WTC11 (cell line): ENCODE measurements at regions of chr17 and their contacts with region 1.

Region 1: DNA sequence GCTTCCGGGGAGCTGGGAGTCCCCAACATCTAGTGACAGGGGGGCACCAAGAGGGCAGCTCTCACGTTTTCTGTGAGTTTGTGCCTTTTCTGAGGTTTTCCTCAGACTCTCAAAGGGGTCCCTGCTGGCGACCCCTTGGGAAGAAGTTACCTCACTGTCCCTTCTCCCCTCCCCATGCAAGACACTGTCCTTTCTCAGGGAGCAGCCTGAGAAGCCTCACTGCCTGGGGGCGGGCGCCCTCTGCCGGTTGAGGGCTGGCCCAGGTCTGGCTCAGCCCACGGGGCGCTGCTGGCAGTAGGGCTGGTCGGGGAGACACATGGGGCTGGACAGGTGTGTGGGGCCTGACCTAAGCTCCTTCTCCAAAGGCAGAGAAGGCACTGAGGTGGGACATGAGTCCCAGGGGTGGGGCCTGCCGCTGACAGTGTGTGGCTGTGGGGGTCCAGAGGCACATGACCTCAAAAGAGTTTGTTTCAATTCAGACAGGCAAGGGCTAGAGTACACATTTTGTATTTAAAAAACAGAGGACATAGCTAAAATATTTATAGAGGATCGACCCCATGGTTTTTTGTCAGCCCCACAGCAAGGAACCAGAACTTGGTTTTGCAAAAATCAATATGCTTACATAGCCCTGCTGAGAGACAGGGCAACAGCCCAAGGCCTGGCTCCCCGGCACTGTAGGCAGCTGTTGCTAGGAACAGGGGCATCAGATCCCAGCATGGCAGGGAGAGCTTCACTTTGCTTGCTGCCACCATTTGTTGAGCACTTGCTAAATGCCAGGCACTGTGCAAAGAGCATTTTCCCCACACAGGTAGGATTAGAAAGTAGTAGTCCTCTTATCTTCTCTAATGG is 18.5 kb upstream of the ALDH3A1 start:
- DNase-seq: peak; percentile 90
- ATAC-seq: peak; percentile 91
- H3K4me3 Mint-ChIP-seq: no peak overlapping the region
- H3K27ac Mint-ChIP-seq: no peak overlapping the region
- H3K4me1 Mint-ChIP-seq: 0 out of 2 replicates have a peak, but pooled peaks cover 2% of the 10 kb centered on the region
- H3K27me3 Mint-ChIP-seq: no peaks in the 10 kb centered on the region
- CTCF ChIP-seq: peak; percentile 64; the same call in 1 of the 2 replicates

Region 2: DNA sequence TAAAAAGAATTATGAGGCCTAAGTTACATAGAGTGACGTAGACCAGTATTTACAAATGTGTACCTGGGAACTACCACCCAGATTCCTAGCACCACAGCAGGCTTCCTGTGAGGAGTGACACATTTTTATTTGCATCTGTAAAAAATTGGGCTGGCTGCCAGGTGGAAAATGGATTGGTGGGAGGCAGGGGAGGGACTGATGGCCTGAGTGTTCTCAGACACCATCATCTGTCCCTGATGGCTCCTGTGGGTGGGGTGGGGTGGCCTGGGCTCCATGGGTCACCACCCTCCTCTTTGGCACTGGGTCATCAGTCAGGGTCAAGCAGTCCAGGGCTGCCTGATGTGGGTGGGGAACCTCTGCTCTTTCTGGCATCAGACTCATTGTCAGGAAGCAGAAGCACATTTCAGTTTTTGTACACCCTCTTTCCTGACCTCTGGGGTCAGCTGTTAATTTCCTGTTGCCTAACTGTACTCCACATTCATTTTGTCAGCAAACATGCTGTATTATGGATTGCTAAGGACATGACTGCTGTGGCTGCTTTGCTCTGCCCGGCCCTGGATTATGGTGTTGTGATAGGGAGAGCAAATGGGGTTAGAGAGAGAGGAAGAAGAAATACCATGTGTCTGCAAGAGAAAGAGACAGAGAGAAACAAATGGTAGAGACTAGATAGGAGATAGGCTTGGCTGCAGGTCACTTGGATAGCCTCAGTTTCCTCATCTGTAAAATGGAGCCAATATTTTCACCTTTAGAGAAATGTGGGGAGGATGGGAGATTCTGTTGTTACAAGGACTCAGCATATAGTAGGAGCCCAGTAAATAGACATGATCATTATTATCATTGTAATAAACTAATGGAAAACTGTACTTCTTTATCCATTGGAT is 368.1 kb before region 1 on chr17:
- CTCF ChIA-PET with region 1: interaction called, 19 read pairs
- POLR2A ChIA-PET with region 1: no interaction called
- DNase-seq: no peak
- ATAC-seq: no peak
- H3K4me3 Mint-ChIP-seq: no peak overlapping the region
- H3K27ac Mint-ChIP-seq: peak overlapping the region; percentile 51; the same call in 1 of the 2 replicates
- H3K4me1 Mint-ChIP-seq: peaks cover 11% of the 10 kb centered on the region
- H3K27me3 Mint-ChIP-seq: no peaks in the 10 kb centered on the region; the same call in 1 of the 2 replicates
- CTCF ChIP-seq: no peak

Region 3: GRCh38 chr17:19533718-19534561 is 232.7 kb before region 1 on chr17 and contains the start of gene SLC47A1:
- CTCF ChIA-PET with region 1: interaction called, 12 read pairs
- POLR2A ChIA-PET with region 1: interaction called, 3 read pairs
- DNase-seq: peak; percentile 42
- ATAC-seq: peak; percentile 83
- H3K4me3 Mint-ChIP-seq: peak within 1 kb of the TSS; percentile 71
- H3K27ac Mint-ChIP-seq: no peak within 1 kb of the TSS
- H3K4me1 Mint-ChIP-seq: peaks cover 35% of the 10 kb centered on the region
- H3K27me3 Mint-ChIP-seq: peaks cover 43% of the 10 kb centered on the region
- CTCF ChIP-seq: no peak
- total RNA-seq, gene SLC47A1: 2.5 to 3.3 TPM (median 2.9 TPM) in 3 replicates

Region 4: GRCh38 chr17:19648475-19649406 is 117.9 kb before region 1 on chr17 and contains the start of gene ALDH3A2:
- CTCF ChIA-PET with region 1: interaction called, 42 read pairs
- POLR2A ChIA-PET with region 1: interaction called, 5 read pairs
- DNase-seq: peak; percentile 89
- ATAC-seq: peak; percentile 83
- H3K4me3 Mint-ChIP-seq: peak within 1 kb of the TSS; percentile 92
- H3K27ac Mint-ChIP-seq: peak within 1 kb of the TSS; percentile 84
- H3K4me1 Mint-ChIP-seq: peaks cover 58% of the 10 kb centered on the region
- H3K27me3 Mint-ChIP-seq: peaks cover 8% of the 10 kb centered on the region
- CTCF ChIP-seq: no peak
- total RNA-seq, gene ALDH3A2: 68.5 to 84.3 TPM (median 80.6 TPM) in 3 replicates

Region 5: DNA sequence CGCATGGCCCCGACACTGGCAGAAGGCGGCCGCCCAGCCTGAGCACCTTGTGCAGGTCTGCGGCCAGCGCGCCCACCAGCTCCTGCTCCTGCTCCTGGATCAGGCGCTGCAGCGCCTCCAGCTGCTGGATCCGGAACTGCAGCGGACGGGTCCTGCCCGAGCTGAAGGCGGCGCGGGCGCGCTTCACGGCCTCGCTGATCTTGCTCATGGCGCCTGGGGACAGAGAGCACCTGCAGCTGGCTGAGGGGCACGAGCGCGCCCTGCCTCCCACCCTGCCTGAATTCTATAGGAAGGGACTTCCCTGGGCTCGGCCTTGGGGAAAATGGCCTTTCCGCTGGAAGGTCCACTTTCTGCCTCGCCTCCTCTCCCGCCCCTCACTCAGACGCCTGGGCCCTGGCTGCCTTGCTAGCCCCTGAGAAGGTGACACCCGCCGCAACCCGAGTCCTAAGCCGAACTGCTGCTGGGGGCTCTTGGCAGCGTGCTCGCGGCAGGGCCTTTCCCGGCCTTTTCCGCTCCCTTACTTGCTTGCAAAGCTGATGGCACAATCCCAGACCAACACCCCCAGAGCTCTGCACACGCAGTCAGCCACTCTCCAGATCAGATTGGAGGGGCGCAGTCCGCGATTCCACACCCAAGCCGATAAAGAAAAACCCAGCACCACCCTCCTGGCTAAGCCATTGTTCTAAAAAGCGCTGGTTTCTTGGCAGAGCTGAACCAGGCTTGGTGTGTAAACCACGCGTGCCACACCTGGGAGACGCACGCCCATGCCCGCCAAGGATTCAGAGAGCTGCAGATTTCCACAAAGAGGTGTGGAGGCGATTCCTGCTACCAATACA is 21.5 kb before region 1 on chr17:
- CTCF ChIA-PET with region 1: interaction called, 91 read pairs
- POLR2A ChIA-PET with region 1: interaction called, 6 read pairs
- DNase-seq: peak; percentile 99
- ATAC-seq: peak; percentile 92
- H3K4me3 Mint-ChIP-seq: peak overlapping the region; percentile 54
- H3K27ac Mint-ChIP-seq: no peak overlapping the region
- H3K4me1 Mint-ChIP-seq: peaks cover 22% of the 10 kb centered on the region
- H3K27me3 Mint-ChIP-seq: peaks cover 13% of the 10 kb centered on the region; the same call in 1 of the 2 replicates
- CTCF ChIP-seq: peak; percentile 97